Activated naive CD4-positive, alpha-beta T cell treated with anti-CD3 and anti-CD28 coated beads, Interleukin-2, amount 10 ng/mL, durations not matched to agents 7 days and 5 days (primary cell): ENCODE measurements at regions of chr16 and their contacts with region 1.

Region 1: DNA sequence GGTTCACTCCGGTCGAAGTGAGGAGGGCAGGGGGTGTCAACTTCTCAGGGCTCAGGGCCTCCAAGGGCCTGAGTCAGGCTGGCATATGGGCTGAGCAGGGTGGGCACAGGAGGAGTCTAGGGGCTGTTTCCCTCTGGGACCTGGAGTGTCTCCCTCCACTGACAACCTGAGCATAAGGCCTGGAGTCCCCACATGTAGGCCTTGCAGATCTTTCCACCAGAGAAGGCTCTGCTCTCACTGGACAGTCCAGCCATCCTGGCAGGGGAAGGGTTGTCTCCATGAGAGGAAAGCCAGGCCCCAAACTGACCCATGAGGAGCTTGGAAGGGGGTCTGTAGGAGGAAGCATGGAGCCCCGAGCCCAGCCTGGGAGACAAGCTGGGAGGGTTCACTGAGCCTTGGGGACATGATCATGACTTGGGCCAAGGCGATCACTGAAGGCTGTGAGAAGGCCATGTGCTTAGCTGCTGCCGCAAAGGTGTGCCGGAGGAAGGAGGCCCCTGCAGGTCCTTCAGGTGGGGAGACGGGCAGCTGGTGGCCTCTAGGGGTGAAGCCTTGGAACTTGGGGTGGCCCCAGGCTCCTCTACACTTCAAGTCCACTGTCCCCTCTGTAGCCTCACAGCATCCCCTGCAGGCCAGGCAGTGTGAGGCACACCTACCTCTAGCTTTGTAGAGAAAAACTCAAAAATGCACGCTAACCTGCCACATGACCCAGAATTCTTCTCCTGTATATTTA is 9.9 kb downstream of the CMTM2 start:
- DNase-seq: peak; percentile 81
- H3K4me3 Mint-ChIP-seq: peak overlapping the region; percentile 65
- H3K27ac Mint-ChIP-seq: peak overlapping the region; percentile 55
- H3K4me1 Mint-ChIP-seq: peaks cover 56% of the 10 kb centered on the region
- H3K27me3 Mint-ChIP-seq: peaks cover 9% of the 10 kb centered on the region

Region 2: DNA sequence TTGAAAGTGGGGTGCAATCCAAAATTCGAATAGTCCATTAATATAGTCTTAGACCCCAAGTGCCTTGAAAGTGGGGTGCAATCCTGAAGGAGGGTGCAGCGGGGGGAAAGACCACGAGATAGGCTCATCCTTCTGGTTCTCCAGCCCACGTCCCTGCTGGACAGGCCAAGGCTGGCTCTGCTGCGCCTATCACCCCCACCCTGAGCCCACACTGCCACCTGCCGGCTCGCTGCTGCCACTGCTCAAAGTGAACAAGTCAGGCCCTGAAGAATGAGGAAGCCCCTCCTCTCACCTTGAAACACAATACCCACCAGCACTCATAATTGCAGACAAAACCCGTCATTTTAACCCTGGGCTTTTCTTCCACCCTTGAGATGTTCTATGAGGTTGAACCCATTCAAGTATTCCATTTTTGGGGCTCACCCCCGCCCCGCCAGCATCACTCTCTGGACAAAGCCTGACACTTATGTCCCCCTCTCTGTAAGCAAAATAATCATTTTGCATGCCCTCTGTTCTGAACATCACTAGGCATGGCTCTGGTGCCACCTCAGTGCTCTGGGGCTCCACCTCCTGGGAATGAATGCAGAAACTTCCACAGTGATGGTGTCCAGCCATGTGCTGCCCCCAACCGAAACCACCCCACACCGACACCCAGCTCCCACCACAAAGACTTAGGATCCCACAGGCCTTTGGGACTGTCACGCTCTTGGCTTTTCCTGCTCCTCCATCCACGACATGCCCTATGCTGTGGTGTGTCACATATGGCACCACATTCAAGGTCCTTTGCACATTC is 105.3 kb before region 1 on chr16:
- CTCF ChIA-PET with region 1: interaction called, 65 read pairs
- DNase-seq: peak; percentile 84
- H3K4me3 Mint-ChIP-seq: no peak overlapping the region
- H3K27ac Mint-ChIP-seq: no peak overlapping the region
- H3K4me1 Mint-ChIP-seq: peaks cover 24% of the 10 kb centered on the region
- H3K27me3 Mint-ChIP-seq: peaks cover 21% of the 10 kb centered on the region

Region 3: DNA sequence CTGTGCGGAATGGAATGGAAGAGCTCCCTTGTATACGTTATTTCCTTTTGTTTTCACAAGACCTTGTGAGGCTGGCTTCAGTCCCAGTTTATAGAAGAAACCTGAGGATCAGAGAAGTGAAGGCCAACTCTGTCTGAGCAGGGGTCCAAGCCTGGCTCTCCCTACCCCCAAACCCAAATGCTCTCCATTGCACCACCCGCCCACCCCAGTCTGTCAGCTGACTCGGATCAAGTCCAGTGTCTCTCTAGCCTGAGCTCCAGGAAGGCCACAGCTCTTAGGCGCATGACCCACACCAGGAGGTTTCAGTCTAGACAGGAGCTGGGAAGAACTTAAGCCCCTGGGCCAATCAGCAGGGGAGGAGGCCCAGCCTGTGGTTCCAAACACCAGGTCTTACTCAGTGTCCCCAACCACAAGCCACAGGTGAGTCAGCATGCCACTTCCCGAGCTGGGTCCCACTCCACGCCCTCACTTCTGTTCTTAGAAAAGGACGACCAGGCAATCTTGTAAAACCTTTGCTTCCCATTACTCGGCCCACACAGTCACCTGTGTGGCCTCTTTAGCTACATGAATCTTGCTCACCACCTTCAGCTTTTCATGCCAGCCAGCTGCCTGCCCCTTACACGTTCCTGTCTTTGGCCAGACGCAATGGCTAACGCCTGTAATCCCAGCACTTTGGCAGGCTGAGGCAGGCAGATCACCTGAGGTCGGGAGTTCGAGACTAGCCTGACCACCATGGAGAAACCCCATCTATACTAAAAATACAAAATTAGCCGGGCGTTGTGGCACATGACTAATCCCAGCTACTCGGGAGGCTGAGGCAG is 67.0 kb before region 1 on chr16:
- CTCF ChIA-PET with region 1: interaction called, 10 read pairs
- DNase-seq: peak; percentile 92
- H3K4me3 Mint-ChIP-seq: peak overlapping the region; percentile 51
- H3K27ac Mint-ChIP-seq: peak overlapping the region; percentile 91
- H3K4me1 Mint-ChIP-seq: peaks cover 97% of the 10 kb centered on the region
- H3K27me3 Mint-ChIP-seq: peaks cover 4% of the 10 kb centered on the region

Region 4: DNA sequence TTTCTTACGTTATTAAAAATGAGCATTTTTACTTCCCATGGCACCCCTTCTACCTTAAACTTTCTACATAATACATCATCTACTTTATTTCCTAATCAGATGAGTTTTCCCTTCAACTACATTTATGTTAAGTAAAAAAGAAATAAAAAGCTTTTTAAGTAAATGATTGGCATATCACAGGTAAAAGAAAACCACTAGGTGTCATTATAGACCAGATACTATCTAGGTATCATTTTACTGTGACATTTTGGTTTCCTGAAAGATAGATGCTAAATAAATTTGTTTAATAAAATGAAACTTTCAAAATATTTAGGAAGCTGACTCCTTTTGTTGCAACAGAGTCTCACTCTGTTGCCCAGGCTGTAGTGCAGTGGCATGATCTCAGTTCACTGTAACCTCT is 26.7 kb before region 1 on chr16:
- CTCF ChIA-PET with region 1: interaction called, 35 read pairs
- DNase-seq: no peak
- H3K4me3 Mint-ChIP-seq: no peak overlapping the region
- H3K27ac Mint-ChIP-seq: no peak overlapping the region
- H3K4me1 Mint-ChIP-seq: peaks cover 60% of the 10 kb centered on the region
- H3K27me3 Mint-ChIP-seq: no peaks in the 10 kb centered on the region

Region 5: DNA sequence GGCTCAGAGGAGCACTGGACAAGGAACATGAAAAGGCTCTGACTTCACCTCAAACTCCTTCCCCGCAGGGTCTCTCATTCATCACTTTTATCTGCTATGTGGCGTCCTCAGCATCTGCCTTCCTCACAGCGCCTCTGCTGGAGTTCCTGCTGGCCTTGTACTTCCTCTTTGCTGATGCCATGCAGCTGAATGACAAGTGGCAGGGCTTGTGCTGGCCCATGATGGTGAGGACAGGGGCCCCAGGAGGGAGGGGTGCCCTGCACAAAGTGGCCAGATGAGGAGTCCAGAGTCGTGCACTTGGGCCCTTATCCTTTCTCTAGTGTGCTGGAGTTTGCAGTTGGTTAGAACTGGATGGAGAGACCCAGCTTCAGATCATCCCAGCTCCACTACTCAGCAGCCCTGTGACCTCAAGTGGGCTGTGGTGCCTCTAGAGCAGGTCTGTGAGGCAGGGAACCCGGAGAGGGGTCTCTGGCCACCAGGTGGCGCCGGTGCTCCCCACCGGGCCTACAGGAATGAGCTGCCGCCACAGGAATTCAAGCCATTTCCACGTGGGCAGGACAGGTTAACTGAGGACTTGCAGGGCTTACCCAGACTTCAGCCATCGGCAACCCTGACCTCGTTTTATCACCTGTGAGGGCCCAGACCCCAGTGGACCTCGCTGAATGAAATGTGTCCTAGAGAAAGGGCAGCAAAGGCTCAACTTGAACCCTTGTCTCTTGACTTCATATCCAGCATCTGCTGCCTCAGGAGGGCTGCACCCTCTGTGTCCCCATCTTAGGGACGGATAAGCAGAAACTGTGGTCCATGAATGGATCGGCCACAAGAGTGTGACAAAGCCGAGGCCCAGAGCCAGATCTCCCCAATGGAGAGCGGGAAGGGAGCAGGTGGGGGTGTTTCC is 19.3 kb after region 1 on chr16:
- CTCF ChIA-PET with region 1: interaction called, 18 read pairs
- DNase-seq: peak; percentile 88
- H3K4me3 Mint-ChIP-seq: peak overlapping the region; percentile 24
- H3K27ac Mint-ChIP-seq: peak overlapping the region; percentile 86
- H3K4me1 Mint-ChIP-seq: peaks cover 37% of the 10 kb centered on the region
- H3K27me3 Mint-ChIP-seq: peaks cover 5% of the 10 kb centered on the region

Region 6: DNA sequence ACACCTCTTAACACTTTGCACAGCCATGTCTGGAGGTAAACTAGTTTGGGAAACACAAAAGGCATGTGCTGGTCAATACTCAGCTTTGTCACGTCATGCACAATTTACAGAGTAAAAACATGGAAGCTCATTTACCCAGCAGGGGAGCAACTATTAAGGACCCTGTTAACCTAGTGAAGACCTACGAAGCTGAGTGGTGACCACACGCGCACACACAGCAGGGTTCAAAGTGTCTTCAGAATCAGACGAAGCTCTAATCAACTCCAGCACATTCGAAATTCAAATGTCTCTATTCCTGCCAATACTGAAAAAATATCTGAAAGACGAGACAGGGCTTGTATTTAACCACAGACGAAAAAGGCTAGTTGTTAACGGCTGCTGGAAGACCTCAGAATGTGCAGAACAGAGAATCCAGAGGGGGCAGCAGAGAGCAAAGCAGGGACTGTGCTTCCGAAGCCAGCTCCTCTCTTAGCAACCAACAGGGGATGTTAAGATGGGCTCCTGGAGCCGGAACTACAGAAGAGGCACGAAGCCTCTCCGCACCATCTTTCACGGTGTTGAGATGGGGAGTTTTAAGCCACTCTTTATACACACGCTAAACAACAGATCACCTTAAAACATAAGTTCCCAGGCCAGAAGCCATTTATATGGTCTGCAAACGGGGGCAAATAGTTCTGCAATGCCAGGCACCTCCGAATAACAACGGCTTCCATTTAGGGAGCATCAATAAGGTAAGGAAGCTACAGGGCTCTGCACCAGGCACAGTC is 61.7 kb after region 1 on chr16:
- CTCF ChIA-PET with region 1: no interaction called
- DNase-seq: peak; percentile 89
- H3K4me3 Mint-ChIP-seq: peak overlapping the region; percentile 17
- H3K27ac Mint-ChIP-seq: no peak overlapping the region
- H3K4me1 Mint-ChIP-seq: peaks cover 18% of the 10 kb centered on the region
- H3K27me3 Mint-ChIP-seq: peaks cover 26% of the 10 kb centered on the region

Region 7: DNA sequence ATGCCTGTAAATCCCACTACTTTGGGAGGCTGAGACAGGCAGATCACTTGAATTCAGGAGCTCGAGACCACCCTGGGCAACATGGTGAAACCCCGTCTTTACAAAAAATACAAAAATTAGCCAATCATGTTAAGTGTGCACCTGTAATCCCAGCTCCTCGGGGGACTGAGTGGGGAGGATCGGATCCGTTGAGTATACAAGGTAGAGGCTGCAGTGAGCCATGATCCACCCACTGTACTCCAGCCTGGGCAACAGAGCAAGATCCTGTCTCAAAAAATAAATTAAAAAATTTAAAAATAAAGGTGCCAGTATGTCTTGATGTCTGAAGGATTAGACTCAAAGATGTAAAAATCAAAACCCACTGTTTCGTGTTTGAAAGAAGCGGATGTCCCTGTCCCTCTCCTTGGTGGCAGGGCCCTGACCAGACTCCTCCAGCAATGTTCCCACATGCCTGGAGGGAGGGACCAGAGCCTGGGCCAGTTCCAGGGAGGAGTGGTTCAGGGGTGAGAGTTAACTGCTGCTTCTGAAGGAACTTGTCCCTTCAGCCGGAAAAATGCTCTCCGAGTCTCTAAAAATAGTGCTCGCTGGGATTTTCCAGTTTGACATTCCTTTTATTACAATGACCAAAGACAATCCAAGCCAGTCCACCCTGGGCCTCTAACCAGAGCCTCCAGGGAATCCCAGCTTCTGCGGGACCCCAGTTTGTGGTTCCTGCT is 116.8 kb after region 1 on chr16:
- CTCF ChIA-PET with region 1: no interaction called
- DNase-seq: no peak
- H3K4me3 Mint-ChIP-seq: no peak overlapping the region
- H3K27ac Mint-ChIP-seq: no peak overlapping the region
- H3K4me1 Mint-ChIP-seq: peaks cover 2% of the 10 kb centered on the region
- H3K27me3 Mint-ChIP-seq: peaks cover 57% of the 10 kb centered on the region

Region 8: GRCh38 chr16:66735891-66736290 is 146.7 kb after region 1 on chr16:
- CTCF ChIA-PET with region 1: no interaction called
- DNase-seq: no peak
- H3K4me3 Mint-ChIP-seq: no peak overlapping the region
- H3K27ac Mint-ChIP-seq: no peak overlapping the region
- H3K4me1 Mint-ChIP-seq: peaks cover 14% of the 10 kb centered on the region
- H3K27me3 Mint-ChIP-seq: no peaks in the 10 kb centered on the region